ENCODE measurements at regions of chr10 and their contacts with region 1.

Region 1: DNA sequence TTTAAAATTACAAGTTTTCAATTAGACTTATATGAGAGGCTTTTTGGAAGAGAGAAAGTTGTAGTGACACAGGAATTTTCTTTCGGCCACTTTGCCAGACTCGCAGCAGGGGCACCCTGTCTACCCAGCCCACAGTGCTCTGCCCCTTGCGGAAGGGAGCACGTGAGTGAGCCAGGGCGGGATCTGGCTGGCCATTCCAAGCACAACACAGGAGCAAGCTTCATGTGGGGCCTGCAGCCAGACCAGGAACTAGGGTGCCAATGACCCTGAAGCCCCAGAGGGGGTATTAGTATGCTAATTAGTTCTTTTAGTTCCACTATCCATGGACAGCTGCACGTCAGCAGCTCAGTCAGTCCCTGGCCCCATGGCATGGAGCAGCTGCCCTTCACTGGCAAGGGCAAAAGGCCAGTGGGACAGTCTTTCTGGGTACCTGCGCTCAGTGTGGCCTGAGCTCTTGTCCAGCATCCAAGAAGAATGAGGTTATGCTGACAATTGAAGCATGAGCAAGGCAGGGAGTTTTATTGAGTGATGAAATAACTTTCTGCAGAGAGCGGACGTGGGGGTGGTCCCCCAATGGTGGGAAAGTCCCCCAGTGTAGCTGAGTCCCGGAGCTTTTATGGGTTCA is 251.1 kb upstream of the CSTF2T start:
- DNase-seq: no peak
- ATAC-seq: peak; percentile 42

Region 2: GRCh38 chr10:51729822-51730555 is 220.5 kb before region 1 on chr10:
- intact Hi-C with region 1: loop called (anchors 10 kb)
- DNase-seq: no peak
- ATAC-seq: no peak

Region 3: GRCh38 chr10:51879238-51879637 is 71.2 kb before region 1 on chr10:
- intact Hi-C with region 1: loop called (anchors 10 kb)
- DNase-seq: no peak
- ATAC-seq: peak; percentile 94

Measured in Right ventricle myocardium inferior (tissue), 1 donor.